Natural killer cell (primary cell): ENCODE measurements at regions of chr7 and their contacts with region 1.

Region 1: GRCh38 chr7:43721193-43721806 is 8.0 kb downstream of the COA1 start:
- DNase-seq: peak in 1 of 2 donors; percentile 81
- ATAC-seq: peak; percentile 50 to 71 (median 52)
- H3K4me3 ChIP-seq: no peak overlapping the region
- H3K4me3 Mint-ChIP-seq: no peak overlapping the region
- H3K27ac ChIP-seq: no peak overlapping the region
- H3K27ac Mint-ChIP-seq: no peak overlapping the region
- H3K4me1 ChIP-seq: peaks cover 4% of the 10 kb centered on the region
- H3K4me1 Mint-ChIP-seq: peaks cover 33 to 39% of the 10 kb centered on the region in 2 donors
- H3K27me3 ChIP-seq: no peaks in the 10 kb centered on the region
- H3K27me3 Mint-ChIP-seq: no peaks in the 10 kb centered on the region
- CTCF ChIP-seq: peak; percentile 96

Region 2: GRCh38 chr7:42940985-42941847 is 780.1 kb before region 1 on chr7:
- intact Hi-C with region 1: loop called (anchors 1 kb)
- DNase-seq: peak; percentile 42 to 80
- ATAC-seq: peak; percentile 58 to 77 (median 74)
- H3K4me3 ChIP-seq: no peak overlapping the region
- H3K4me3 Mint-ChIP-seq: no peak overlapping the region
- H3K27ac ChIP-seq: no peak overlapping the region
- H3K27ac Mint-ChIP-seq: no peak overlapping the region
- H3K4me1 ChIP-seq: no peaks in the 10 kb centered on the region
- H3K4me1 Mint-ChIP-seq: no peaks in the 10 kb centered on the region
- H3K27me3 ChIP-seq: no peaks in the 10 kb centered on the region
- H3K27me3 Mint-ChIP-seq: no peaks in the 10 kb centered on the region
- CTCF ChIP-seq: peak; percentile 85

Region 3: GRCh38 chr7:43260980-43261878 is 460.1 kb before region 1 on chr7:
- intact Hi-C with region 1: loop called (anchors 5 kb)
- DNase-seq: peak; percentile 33 to 76
- ATAC-seq: peak in 2 of 3 donors; percentile 51 to 61
- H3K4me3 ChIP-seq: no peak overlapping the region
- H3K4me3 Mint-ChIP-seq: no peak overlapping the region
- H3K27ac ChIP-seq: no peak overlapping the region
- H3K27ac Mint-ChIP-seq: no peak overlapping the region
- H3K4me1 ChIP-seq: no peaks in the 10 kb centered on the region
- H3K4me1 Mint-ChIP-seq: no peaks in the 10 kb centered on the region
- H3K27me3 ChIP-seq: peaks cover 3% of the 10 kb centered on the region
- H3K27me3 Mint-ChIP-seq: peaks cover 7 to 19% of the 10 kb centered on the region in 2 donors
- CTCF ChIP-seq: peak; percentile 76

Region 4: GRCh38 chr7:43537765-43538403 is 183.4 kb before region 1 on chr7:
- intact Hi-C with region 1: no loop called
- DNase-seq: no peak
- ATAC-seq: no peak
- H3K4me3 ChIP-seq: no peak overlapping the region
- H3K4me3 Mint-ChIP-seq: no peak overlapping the region
- H3K27ac ChIP-seq: no peak overlapping the region
- H3K27ac Mint-ChIP-seq: no peak overlapping the region
- H3K4me1 ChIP-seq: no peaks in the 10 kb centered on the region
- H3K4me1 Mint-ChIP-seq: no peaks in the 10 kb centered on the region
- H3K27me3 ChIP-seq: no peaks in the 10 kb centered on the region
- H3K27me3 Mint-ChIP-seq: peaks cover 14 to 28% of the 10 kb centered on the region in 2 donors
- CTCF ChIP-seq: no peak

Region 5: GRCh38 chr7:43700059-43700501 is 21.2 kb before region 1 on chr7:
- intact Hi-C with region 1: loop called (anchors 1 kb)
- DNase-seq: peak in 1 of 2 donors; percentile 80
- ATAC-seq: peak; percentile 70 to 94 (median 84)
- H3K4me3 ChIP-seq: no peak overlapping the region
- H3K4me3 Mint-ChIP-seq: peak overlapping the region; percentile 32
- H3K27ac ChIP-seq: no peak overlapping the region
- H3K27ac Mint-ChIP-seq: peak overlapping the region; percentile 54 to 63
- H3K4me1 ChIP-seq: no peaks in the 10 kb centered on the region
- H3K4me1 Mint-ChIP-seq: peaks cover 29 to 31% of the 10 kb centered on the region in 2 donors
- H3K27me3 ChIP-seq: no peaks in the 10 kb centered on the region
- H3K27me3 Mint-ChIP-seq: no peaks in the 10 kb centered on the region
- CTCF ChIP-seq: peak; percentile 79